Sigmoid colon (tissue), 7 donors: ENCODE measurements at regions of chr10 and their contacts with region 1.

Region 1: GRCh38 chr10:44857363-44858016 is 53.6 kb upstream of the TMEM72 start:
- DNase-seq: peak; percentile 77
- H3K4me3 ChIP-seq: no peak overlapping the region
- H3K27ac ChIP-seq: no peak overlapping the region
- H3K4me1 ChIP-seq: no peaks in the 10 kb centered on the region
- H3K27me3 ChIP-seq: no peaks in the 10 kb centered on the region
- CTCF ChIP-seq: peak; percentile 77 to 99 (median 93)
- EP300 ChIP-seq: no peak
- POLR2A ChIP-seq: no peak

Region 2: GRCh38 chr10:44745920-44746319 is 111.6 kb before region 1 on chr10:
- intact Hi-C with region 1: loop called (anchors 10 kb)
- DNase-seq: no peak
- H3K4me3 ChIP-seq: no peak overlapping the region
- H3K27ac ChIP-seq: no peak overlapping the region
- H3K4me1 ChIP-seq: peaks cover 0 to 13% (median 0%) of the 10 kb centered on the region in 4 donors
- H3K27me3 ChIP-seq: no peaks in the 10 kb centered on the region
- CTCF ChIP-seq: no peak
- EP300 ChIP-seq: no peak
- POLR2A ChIP-seq: no peak